ENCODE measurements at regions of chr17 and their contacts with region 1.

Region 1: DNA sequence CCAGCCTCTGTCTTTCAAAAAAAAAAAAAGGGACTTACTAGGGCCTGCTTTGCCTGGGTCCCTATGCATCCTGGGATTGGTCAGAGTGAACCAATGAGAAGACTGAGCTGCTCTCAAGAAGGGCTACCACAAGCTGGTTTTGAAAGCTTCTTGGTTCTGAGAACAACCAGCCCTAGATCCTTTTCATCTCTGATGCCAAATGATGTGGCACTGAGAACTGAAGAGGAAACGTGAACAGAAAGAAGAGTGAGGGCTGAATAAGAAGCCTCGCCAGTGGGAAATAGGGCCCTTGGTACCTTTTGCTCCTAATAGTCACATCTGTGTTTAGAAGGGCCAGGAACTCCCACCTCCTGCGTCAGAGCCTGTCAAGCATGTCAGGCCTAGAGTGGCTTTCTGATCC is 10.7 kb downstream of the TACO1 start:
- DNase-seq: no peak
- H3K4me3 ChIP-seq: no peak overlapping the region
- H3K27ac ChIP-seq: no peak overlapping the region
- H3K4me1 ChIP-seq: no peaks in the 10 kb centered on the region
- H3K27me3 ChIP-seq: no peaks in the 10 kb centered on the region
- CTCF ChIP-seq: no peak
- POLR2A ChIP-seq: no peak

Region 2: GRCh38 chr17:63434876-63435684 is 176.3 kb before region 1 on chr17:
- CTCF ChIA-PET with region 1: interaction called, 18 read pairs
- POLR2A ChIA-PET with region 1: no interaction called
- dilution Hi-C with region 1: no loop called
- intact Hi-C with region 1: no loop called
- DNase-seq: peak; percentile 39
- H3K4me3 ChIP-seq: no peak overlapping the region
- H3K27ac ChIP-seq: no peak overlapping the region
- H3K4me1 ChIP-seq: peaks cover 35% of the 10 kb centered on the region
- H3K27me3 ChIP-seq: no peaks in the 10 kb centered on the region
- CTCF ChIP-seq: peak; percentile 23 to 27
- POLR2A ChIP-seq: no peak

Region 3: DNA sequence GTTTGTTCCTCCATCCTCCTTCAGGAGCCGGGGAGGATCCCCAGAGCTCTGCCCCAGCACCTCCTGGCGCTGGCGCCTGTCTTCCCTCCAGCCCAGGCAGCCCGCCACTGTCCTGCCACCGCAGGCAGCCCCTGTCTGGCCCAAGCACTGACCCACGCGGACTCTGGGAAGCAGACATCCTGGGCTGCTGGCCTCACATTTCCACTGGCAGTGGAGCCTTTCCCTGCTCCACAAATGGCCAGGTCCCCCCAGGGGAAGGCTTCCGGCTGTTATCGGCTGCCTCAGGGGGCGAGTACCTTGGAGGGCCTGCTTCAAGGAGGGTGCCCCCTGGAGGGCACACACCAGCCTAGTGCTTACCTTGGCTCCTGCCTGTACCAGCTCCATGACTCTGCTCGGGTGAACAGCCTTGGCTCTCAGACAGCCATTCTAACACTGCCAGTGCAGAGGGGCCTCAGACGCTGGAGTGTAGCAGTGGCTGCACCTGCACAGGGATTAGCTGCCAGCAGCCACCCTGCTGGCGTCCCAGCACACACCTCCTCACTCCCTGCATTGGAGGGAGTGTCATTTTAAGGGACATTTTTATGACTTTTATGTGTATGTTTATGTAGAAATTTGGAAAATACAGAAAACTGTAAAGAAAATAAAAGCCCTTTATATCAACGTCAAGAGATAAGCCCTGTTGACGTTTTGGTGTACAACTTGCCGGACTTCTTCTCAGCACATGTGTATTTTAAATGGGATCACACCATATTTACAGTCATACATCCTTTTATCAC is 113.5 kb before region 1 on chr17:
- CTCF ChIA-PET with region 1: interaction called, 10 read pairs
- POLR2A ChIA-PET with region 1: no interaction called
- dilution Hi-C with region 1: no loop called
- intact Hi-C with region 1: loop called (anchors 5 kb)
- DNase-seq: no peak
- H3K4me3 ChIP-seq: no peak overlapping the region
- H3K27ac ChIP-seq: no peak overlapping the region
- H3K4me1 ChIP-seq: no peaks in the 10 kb centered on the region
- H3K27me3 ChIP-seq: peaks cover 2 to 3% of the 10 kb centered on the region in 2 experiments
- CTCF ChIP-seq: peak; percentile 5 to 44
- POLR2A ChIP-seq: no peak

Region 4: GRCh38 chr17:63571763-63572271 is 39.5 kb before region 1 on chr17:
- CTCF ChIA-PET with region 1: interaction called, 11 read pairs
- POLR2A ChIA-PET with region 1: no interaction called
- dilution Hi-C with region 1: no loop called
- intact Hi-C with region 1: no loop called
- DNase-seq: peak; percentile 58
- H3K4me3 ChIP-seq: no peak overlapping the region
- H3K27ac ChIP-seq: no peak overlapping the region
- H3K4me1 ChIP-seq: peaks cover 13% of the 10 kb centered on the region
- H3K27me3 ChIP-seq: no peaks in the 10 kb centered on the region
- CTCF ChIP-seq: no peak
- POLR2A ChIP-seq: no peak

Region 5: DNA sequence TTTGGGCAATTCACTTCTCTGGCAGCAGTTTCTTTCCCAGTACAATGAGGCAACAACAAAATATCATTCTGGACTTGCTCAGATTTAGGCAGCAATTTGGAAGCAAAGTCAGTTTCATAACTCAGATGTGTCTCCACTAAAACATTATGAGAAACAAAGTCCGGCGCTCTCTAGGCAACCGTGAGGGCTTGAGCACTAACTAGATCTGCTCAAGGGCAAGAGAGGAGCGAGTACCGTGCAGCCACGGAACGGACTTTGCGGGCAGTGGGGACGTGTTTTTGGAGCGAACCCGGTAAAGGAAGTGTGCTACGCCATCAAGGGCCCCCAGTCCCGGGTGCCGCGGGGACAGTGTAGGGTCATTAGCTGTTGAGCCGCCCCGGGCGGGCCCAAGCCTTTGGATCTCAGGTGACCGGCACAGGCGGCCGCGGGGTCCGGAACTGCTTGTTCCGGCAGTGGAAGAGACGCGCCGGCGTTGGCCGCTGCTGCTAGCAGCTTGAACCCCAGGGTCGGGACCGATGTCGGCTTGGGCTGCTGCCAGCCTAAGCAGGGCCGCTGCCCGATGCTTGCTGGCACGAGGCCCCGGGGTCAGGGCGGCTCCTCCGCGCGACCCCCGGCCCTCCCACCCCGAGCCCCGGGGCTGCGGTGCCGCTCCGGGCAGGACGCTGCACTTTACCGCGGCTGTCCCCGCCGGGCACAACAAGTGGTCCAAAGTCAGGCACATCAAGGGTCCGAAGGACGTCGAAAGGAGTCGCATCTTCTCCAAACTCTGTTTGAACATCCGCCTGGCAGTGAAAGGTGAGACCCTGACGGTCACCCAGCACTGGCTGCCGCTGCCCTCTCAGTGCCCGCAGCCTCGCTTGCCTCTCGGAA is 10.6 kb before region 1 on chr17 and contains the start of gene TACO1:
- CTCF ChIA-PET with region 1: interaction called, 29 read pairs
- POLR2A ChIA-PET with region 1: no interaction called
- dilution Hi-C with region 1: no loop called
- intact Hi-C with region 1: no loop called
- DNase-seq: peak; percentile 77
- H3K4me3 ChIP-seq: peak within 1 kb of the TSS; percentile 73 to 97 (median 81)
- H3K27ac ChIP-seq: peak within 1 kb of the TSS; percentile 33
- H3K4me1 ChIP-seq: peaks cover 25% of the 10 kb centered on the region
- H3K27me3 ChIP-seq: no peaks in the 10 kb centered on the region
- CTCF ChIP-seq: no peak
- POLR2A ChIP-seq: peak; percentile 74
- total RNA-seq, gene TACO1: 26.1 and 31.7 TPM in 2 replicates

Region 6: DNA sequence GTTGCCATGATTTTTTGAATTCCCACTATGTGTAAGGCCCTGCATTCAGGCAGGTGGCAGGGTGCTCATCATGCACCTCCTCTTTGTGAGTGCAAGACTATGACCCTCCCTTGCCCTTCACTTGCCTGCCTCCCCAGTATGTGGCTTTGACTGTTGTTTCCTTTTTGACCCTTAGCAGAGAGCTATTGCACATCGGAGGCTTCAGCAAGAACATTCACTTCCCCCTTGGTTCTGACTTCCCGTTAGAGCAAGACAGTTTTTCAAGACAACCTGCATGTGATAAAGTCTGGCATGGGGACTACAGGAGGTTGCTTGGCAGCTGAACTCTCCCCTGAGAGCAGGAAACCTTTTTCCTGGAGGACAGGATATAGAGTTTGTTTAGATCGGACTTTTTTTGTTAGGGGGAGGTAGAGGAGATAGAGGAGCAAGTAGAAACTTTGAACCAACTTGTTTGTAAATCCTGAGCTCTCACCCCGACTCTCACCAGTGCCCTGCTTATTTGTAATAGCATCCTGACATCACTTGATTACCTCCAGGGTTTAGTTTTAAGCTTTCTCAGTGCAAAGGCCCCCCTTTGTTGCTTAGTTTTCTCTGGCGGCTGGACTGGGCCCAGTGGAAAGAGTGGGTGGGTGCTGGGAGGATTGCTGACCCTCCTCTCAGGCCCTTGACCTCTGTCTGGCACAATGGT is 54.3 kb after region 1 on chr17:
- CTCF ChIA-PET with region 1: interaction called, 10 read pairs
- POLR2A ChIA-PET with region 1: no interaction called
- dilution Hi-C with region 1: no loop called
- intact Hi-C with region 1: no loop called
- DNase-seq: peak; percentile 80
- H3K4me3 ChIP-seq: peak overlapping the region in 1 of 3 experiments; percentile 2
- H3K27ac ChIP-seq: peak overlapping the region; percentile 17
- H3K4me1 ChIP-seq: peaks cover 20% of the 10 kb centered on the region
- H3K27me3 ChIP-seq: no peaks in the 10 kb centered on the region
- CTCF ChIP-seq: no peak
- POLR2A ChIP-seq: no peak